ENCODE measurements at regions of chr3 and their contacts with region 1.

Region 1: GRCh38 chr3:115819785-115820384 is 196.6 kb downstream of the GAP43 start:
- DNase-seq: no peak
- ATAC-seq: peak; percentile 90
- H3K4me3 Mint-ChIP-seq: no peak overlapping the region
- H3K27ac Mint-ChIP-seq: no peak overlapping the region
- H3K4me1 Mint-ChIP-seq: no peaks in the 10 kb centered on the region
- H3K27me3 Mint-ChIP-seq: no peaks in the 10 kb centered on the region
- CTCF ChIP-seq: peak; percentile 61

Region 2: DNA sequence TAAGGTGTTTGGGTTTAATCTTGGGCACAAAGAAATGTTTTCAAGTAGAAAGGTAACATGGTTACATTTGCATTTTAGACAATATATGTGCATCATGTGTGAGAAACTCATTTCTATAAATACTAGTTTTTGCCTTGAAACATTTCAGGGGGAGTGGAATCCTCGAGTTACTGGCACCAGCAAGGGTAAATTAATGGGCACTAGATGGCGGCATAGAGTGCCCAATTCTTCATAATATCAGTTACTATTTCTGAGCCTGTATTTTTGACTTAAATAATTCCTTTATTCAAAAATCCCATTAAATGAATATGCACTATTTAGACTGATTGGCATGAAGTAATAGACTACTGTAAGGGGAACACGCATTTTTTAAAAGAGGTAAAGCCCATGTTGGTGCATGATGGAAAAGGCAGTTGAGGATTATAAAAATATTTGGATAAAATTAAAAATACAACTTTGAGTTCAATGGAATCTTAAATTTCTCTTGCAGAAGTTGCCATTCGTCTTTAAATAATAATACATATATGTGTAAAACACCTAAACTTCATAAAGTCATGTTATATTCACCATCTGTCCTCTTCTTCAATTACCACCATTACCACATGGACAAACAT is 779.1 kb before region 1 on chr3:
- CTCF ChIA-PET with region 1: no interaction called
- POLR2A ChIA-PET with region 1: no interaction called
- intact Hi-C with region 1: loop called (anchors 5 kb)
- DNase-seq: no peak
- ATAC-seq: no peak
- H3K4me3 Mint-ChIP-seq: no peak overlapping the region
- H3K27ac Mint-ChIP-seq: no peak overlapping the region
- H3K4me1 Mint-ChIP-seq: no peaks in the 10 kb centered on the region
- H3K27me3 Mint-ChIP-seq: no peaks in the 10 kb centered on the region
- CTCF ChIP-seq: peak; percentile 24

Region 3: GRCh38 chr3:115836944-115837343 is 17.1 kb after region 1 on chr3:
- CTCF ChIA-PET with region 1: interaction called, 12 read pairs
- POLR2A ChIA-PET with region 1: no interaction called
- intact Hi-C with region 1: no loop called
- DNase-seq: no peak
- ATAC-seq: no peak
- H3K4me3 Mint-ChIP-seq: no peak overlapping the region
- H3K27ac Mint-ChIP-seq: no peak overlapping the region
- H3K4me1 Mint-ChIP-seq: no peaks in the 10 kb centered on the region
- H3K27me3 Mint-ChIP-seq: peaks cover 2% of the 10 kb centered on the region
- CTCF ChIP-seq: peak; percentile 42

Region 4: DNA sequence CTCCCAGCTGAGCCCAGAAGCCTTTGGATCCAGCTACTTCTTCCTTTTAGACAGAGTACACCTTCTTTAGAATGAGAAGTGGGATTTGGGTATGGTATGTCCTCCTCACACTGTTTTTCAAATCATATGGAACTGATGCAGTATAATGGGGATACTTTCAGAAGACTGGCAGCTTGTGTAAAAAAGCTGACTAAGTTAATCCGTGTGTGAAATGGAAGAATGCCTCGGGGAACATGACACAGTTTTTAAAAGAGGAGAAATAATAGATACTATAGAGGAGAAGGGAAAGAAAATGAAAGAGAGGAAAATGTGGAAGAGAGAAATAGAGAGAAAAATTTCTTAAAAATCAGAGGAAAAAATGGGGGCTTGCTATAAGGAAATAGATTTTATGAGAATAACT is 937.4 kb after region 1 on chr3:
- CTCF ChIA-PET with region 1: no interaction called
- POLR2A ChIA-PET with region 1: no interaction called
- intact Hi-C with region 1: loop called (anchors 5 kb)
- DNase-seq: no peak
- ATAC-seq: no peak
- H3K4me3 Mint-ChIP-seq: no peak overlapping the region
- H3K27ac Mint-ChIP-seq: no peak overlapping the region
- H3K4me1 Mint-ChIP-seq: no peaks in the 10 kb centered on the region
- H3K27me3 Mint-ChIP-seq: peaks cover 4% of the 10 kb centered on the region
- CTCF ChIP-seq: no peak